IMR-90 (cell line): ENCODE measurements at regions of chrX and their contacts with region 1.

Region 1: GRCh38 chrX:13734278-13735172 is at the starts of genes OFD1 and TRAPPC2:
- DNase-seq: peak; percentile 97
- ATAC-seq: peak; percentile 97
- H3K4me3 ChIP-seq: peak within 1 kb of the TSS; percentile 81
- H3K27ac ChIP-seq: peak within 1 kb of the TSS; percentile 90
- H3K4me1 ChIP-seq: no peaks in the 10 kb centered on the region
- H3K27me3 ChIP-seq: no peaks in the 10 kb centered on the region
- CTCF ChIP-seq: no peak
- POLR2A ChIP-seq: peak; percentile 95
- RAD21 ChIP-seq: peak; percentile 28; the same call in 1 of the 2 replicates
- total RNA-seq, gene OFD1: 8.4 and 10.6 TPM in 2 replicates
- total RNA-seq, gene TRAPPC2: 13.8 and 19.2 TPM in 2 replicates

Region 2: DNA sequence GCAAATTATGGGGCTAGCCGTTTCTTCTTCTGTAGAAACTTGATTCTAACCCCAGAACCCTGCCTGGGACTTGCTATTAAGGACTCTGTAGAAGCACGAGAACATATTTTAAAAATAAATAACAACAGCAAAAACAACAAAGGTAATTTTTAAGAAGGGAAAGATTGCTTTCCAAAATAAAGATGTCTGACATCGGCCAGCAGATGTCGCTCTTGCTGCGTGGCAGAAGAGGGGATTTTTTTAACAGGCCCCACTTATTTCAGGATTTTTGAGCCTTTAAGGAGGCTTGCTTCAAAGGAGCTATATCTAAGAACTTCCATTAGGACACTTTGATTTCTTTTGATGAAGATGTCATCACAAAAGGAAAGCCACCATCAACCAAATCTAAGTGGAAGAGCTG is 228.0 kb before region 1 on chrX:
- CTCF ChIA-PET with region 1: interaction called, 4 read pairs
- POLR2A ChIA-PET with region 1: no interaction called
- dilution Hi-C with region 1: no loop called
- in situ Hi-C with region 1: no loop called
- intact Hi-C with region 1: loop called (anchors 5 kb)
- DNase-seq: peak; percentile 61
- ATAC-seq: 0 out of 2 replicates have a peak, but pooled peaks have one; percentile 48
- H3K4me3 ChIP-seq: no peak overlapping the region
- H3K27ac ChIP-seq: no peak overlapping the region
- H3K4me1 ChIP-seq: no peaks in the 10 kb centered on the region
- H3K27me3 ChIP-seq: peaks cover 9% of the 10 kb centered on the region
- CTCF ChIP-seq: peak; percentile 94
- POLR2A ChIP-seq: no peak
- RAD21 ChIP-seq: peak; percentile 95

Region 3: GRCh38 chrX:13658602-13659001 is 75.9 kb before region 1 on chrX:
- CTCF ChIA-PET with region 1: no interaction called
- POLR2A ChIA-PET with region 1: no interaction called
- dilution Hi-C with region 1: no loop called
- in situ Hi-C with region 1: no loop called
- intact Hi-C with region 1: loop called (anchors 1 kb)
- DNase-seq: peak; percentile 73
- ATAC-seq: peak; percentile 71
- H3K4me3 ChIP-seq: no peak overlapping the region
- H3K27ac ChIP-seq: no peak overlapping the region
- H3K4me1 ChIP-seq: peaks cover 5% of the 10 kb centered on the region; the same call in 1 of the 2 replicates
- H3K27me3 ChIP-seq: peaks cover 2% of the 10 kb centered on the region
- CTCF ChIP-seq: peak; percentile 80
- POLR2A ChIP-seq: no peak
- RAD21 ChIP-seq: peak; percentile 73

Region 4: DNA sequence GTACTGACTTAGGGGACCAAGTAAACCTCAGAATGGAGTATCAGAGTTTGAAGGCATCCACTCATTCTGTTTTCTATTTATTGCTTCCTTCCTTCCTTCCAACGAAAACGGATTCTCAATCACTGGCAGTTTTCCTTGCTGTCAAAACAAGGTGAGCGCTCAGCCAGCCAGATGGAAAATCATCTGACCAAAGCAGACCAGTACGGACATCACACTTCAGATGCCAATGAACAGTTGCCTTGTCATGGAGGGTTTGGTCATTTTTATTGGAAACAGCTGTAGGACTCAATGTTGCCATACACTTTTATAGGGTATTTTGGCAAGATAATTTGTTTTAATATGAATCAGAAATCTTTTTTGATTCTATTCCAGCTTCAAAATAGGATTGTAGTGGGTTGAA is 278.5 kb after region 1 on chrX:
- CTCF ChIA-PET with region 1: no interaction called
- POLR2A ChIA-PET with region 1: no interaction called
- dilution Hi-C with region 1: no loop called
- in situ Hi-C with region 1: no loop called
- intact Hi-C with region 1: no loop called
- DNase-seq: no peak
- ATAC-seq: no peak
- H3K4me3 ChIP-seq: no peak overlapping the region
- H3K27ac ChIP-seq: no peak overlapping the region
- H3K4me1 ChIP-seq: no peaks in the 10 kb centered on the region
- H3K27me3 ChIP-seq: no peaks in the 10 kb centered on the region
- CTCF ChIP-seq: no peak
- POLR2A ChIP-seq: no peak
- RAD21 ChIP-seq: no peak